MCF 10A (cell line): ENCODE measurements at regions of chrX and their contacts with region 1.

Region 1: GRCh38 chrX:154980330-154981096 is 42.0 kb downstream of the F8 start:
- DNase-seq: peak; percentile 86
- H3K4me3 Mint-ChIP-seq: peak overlapping the region; percentile 71
- H3K27ac Mint-ChIP-seq: peak overlapping the region; percentile 86
- H3K4me1 Mint-ChIP-seq: peaks cover 18% of the 10 kb centered on the region
- H3K27me3 Mint-ChIP-seq: no peaks in the 10 kb centered on the region
- CTCF ChIP-seq: peak; percentile 84

Region 2: DNA sequence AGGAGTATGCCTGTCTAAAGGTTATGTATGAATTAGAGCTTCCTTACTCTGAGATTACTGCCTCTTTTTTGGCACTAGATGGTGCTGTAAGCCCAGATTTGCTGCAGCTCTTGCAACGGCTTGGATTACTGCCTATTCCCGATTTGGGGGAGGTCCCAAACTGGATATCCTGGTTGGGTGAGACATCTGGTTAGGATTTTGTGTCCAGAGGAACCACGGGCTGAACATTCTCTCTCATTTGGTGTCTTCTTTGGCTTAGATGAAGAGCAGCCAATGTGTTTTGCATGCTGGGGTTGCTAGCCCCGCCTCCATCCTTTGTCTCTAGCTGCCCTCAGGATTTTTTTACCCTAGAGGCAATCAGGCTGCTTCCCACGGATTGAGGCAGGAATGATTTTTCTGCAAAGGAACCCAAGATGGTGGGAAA is 62.4 kb before region 1 on chrX:
- CTCF ChIA-PET with region 1: interaction called, 16 read pairs
- POLR2A ChIA-PET with region 1: interaction called, 5 read pairs
- intact Hi-C with region 1: loop called (anchors 1 kb)
- DNase-seq: peak; percentile 79
- H3K4me3 Mint-ChIP-seq: peak overlapping the region; percentile 56
- H3K27ac Mint-ChIP-seq: no peak overlapping the region
- H3K4me1 Mint-ChIP-seq: no peaks in the 10 kb centered on the region
- H3K27me3 Mint-ChIP-seq: peaks cover 44% of the 10 kb centered on the region
- CTCF ChIP-seq: peak; percentile 76

Region 3: GRCh38 chrX:155065035-155065734 is 84.7 kb after region 1 on chrX:
- CTCF ChIA-PET with region 1: interaction called, 11 read pairs
- POLR2A ChIA-PET with region 1: no interaction called
- intact Hi-C with region 1: no loop called
- DNase-seq: peak; percentile 86
- H3K4me3 Mint-ChIP-seq: peak overlapping the region; percentile 80
- H3K27ac Mint-ChIP-seq: peak overlapping the region; percentile 92
- H3K4me1 Mint-ChIP-seq: peaks cover 24% of the 10 kb centered on the region
- H3K27me3 Mint-ChIP-seq: peaks cover 10% of the 10 kb centered on the region
- CTCF ChIP-seq: no peak

Region 4: DNA sequence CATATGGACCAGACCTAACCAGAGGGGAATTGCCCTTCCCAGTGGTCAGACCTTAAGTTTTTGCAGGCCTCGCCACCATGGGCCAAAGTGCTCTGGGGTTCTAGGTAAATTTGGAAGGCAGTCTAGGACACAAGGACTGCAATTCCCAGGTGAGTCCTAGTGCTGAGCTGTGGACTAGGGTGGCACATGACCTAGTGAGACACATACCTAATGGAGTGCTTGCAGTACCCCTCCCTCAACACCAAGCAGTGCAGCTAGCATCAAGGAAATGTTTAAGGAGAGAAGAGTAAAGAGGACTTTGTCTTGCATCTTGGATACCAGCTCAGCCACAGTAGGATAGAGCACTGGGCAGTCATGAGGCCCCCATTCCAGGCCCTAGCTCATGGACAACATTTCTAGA is 151.6 kb after region 1 on chrX:
- CTCF ChIA-PET with region 1: interaction called, 3 read pairs
- POLR2A ChIA-PET with region 1: no interaction called
- intact Hi-C with region 1: loop called (anchors 1 kb)
- DNase-seq: no peak
- H3K4me3 Mint-ChIP-seq: no peak overlapping the region
- H3K27ac Mint-ChIP-seq: no peak overlapping the region
- H3K4me1 Mint-ChIP-seq: peaks cover 7% of the 10 kb centered on the region
- H3K27me3 Mint-ChIP-seq: no peaks in the 10 kb centered on the region
- CTCF ChIP-seq: no peak

Region 5: DNA sequence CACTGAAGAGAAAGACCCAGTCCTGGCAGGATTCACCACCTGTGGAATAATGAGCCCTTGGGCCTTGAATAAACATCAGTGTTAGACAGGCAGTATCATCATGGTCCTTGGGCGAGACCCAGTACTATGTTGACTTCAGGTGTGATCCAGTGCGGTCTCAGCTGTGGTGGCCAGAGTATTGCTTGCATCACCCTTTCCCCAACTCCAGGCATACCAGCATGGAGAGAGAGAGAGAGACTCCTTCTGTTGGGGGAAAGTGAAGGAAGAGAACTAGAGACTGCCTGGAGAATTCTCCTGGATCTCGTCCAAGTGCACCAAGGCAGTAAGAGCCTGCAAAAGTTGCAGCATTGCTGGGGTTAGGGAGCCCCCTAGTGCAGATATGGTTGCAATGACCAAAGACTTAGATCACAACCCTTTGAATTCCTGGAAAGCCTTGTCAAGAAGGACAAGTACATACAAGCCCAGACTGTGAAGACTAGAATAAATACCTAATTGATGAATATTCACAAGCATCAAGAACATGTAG is 839.5 kb after region 1 on chrX:
- CTCF ChIA-PET with region 1: no interaction called
- POLR2A ChIA-PET with region 1: no interaction called
- intact Hi-C with region 1: loop called (anchors 1 kb)
- DNase-seq: peak; percentile 91
- H3K4me3 Mint-ChIP-seq: no peak overlapping the region
- H3K27ac Mint-ChIP-seq: no peak overlapping the region
- H3K4me1 Mint-ChIP-seq: peaks cover 6% of the 10 kb centered on the region
- H3K27me3 Mint-ChIP-seq: no peaks in the 10 kb centered on the region
- CTCF ChIP-seq: peak; percentile 61